Mucosa of descending colon (tissue), 3 donors: ENCODE measurements at regions of chr7 and their contacts with region 1.

Region 1: GRCh38 chr7:24572997-24573625 is at the start of gene PALS2:
- DNase-seq: peak; percentile 78 to 88 (median 86)
- ATAC-seq: peak; percentile 95
- H3K4me3 ChIP-seq: peak within 1 kb of the TSS; percentile 43
- H3K4me1 ChIP-seq: no peaks in the 10 kb centered on the region
- CTCF ChIP-seq: no peak
- total RNA-seq, gene PALS2: 5.0 to 15.1 (median 7.2) TPM

Region 2: GRCh38 chr7:24665564-24666294 is 92.6 kb after region 1 on chr7:
- intact Hi-C with region 1: loop called (anchors 5 to 10 kb)
- DNase-seq: peak in 1 of 3 donors; percentile 73
- ATAC-seq: peak; percentile 55
- H3K4me3 ChIP-seq: no peak overlapping the region
- H3K4me1 ChIP-seq: no peaks in the 10 kb centered on the region
- CTCF ChIP-seq: peak; percentile 46

Region 3: DNA sequence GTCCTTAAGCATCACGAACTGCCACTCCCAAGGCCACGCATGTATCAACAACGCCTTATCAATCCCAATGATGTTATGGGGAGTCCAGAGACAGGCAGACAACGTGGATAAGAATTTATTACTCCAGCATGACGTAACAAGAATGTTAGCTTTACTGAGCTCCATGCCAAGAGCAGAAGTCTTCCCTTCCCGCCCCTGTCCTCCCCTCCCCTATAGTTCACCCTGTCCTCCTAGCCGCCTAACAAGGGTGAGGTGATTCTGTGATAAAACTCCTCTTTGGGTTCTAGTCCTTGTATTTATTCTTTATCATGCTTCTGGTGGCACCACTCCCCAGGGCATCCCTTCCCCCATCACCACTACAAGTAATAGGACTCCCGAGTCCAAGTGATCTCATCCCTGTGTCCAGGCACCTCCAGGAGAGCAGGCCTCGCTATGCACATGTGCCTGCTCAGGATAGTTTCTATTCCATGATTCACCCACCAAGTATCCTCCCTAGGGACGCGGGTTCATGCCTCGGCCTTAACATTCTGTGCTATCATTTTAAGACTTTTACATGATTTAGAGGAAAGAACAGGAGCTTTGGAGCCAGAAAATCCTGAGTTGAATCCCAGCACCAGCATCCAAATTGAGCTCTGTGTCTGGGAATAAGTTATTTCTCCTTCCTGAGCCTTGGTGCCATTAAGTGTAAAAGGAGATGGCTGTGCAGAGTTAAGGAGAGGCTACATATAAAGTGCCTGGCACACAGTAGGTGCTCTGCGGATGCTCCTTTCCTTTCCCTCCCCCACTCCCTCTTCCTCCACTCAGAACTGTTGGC is 168.8 kb after region 1 on chr7:
- intact Hi-C with region 1: no loop called
- DNase-seq: no peak
- ATAC-seq: peak; percentile 26
- H3K4me3 ChIP-seq: no peak overlapping the region
- H3K4me1 ChIP-seq: no peaks in the 10 kb centered on the region
- CTCF ChIP-seq: no peak